Left cardiac atrium (tissue), 4 donors: ENCODE measurements at regions of chr3 and their contacts with region 1.

Region 1: GRCh38 chr3:138068579-138069174 is 46.7 kb downstream of the DZIP1L start:
- DNase-seq: peak; percentile 82
- ATAC-seq: peak; percentile 90 to 94

Region 2: GRCh38 chr3:137988152-137988551 is 80.5 kb before region 1 on chr3:
- intact Hi-C with region 1: no loop called
- DNase-seq: no peak
- ATAC-seq: no peak

Region 3: DNA sequence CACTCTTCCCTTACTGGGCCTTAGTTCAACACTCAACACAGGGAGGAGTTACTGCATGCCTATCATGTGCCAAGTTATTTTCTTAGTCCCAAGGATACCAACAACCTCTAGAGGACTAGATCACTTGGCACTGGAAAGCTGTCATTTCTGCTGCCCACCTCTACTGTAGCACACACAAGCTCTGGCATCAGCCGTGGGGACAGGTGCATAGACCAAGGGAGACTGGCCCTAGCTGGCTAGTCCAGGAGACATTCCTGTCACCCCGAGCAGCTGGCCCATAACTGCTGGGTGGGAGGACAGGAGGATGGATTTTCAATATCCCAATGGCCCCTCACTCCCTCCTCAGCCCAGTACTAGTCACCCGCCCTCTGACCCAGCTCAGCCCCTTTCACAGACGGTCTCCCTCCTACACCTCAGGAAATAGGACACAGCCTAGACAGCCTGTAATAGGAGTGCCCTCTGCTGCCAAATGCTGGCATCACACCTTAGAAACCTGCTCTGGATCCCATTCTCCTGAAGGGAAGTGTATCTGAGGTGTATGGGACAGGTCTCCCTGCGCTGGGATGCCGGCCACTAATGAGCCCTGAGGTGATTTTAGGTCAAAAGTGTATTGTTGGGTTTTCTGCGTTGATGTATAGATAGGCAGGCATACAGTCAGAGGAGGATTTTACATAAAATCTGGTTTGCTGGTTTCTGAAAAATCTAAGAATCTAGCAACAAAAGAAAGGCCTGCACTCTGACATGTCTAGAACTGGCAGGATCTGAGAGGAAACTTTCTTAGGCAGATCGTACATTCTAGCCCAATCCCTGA is 50.1 kb after region 1 on chr3:
- intact Hi-C with region 1: loop called (anchors 1 to 5 kb)
- DNase-seq: peak; percentile 65
- ATAC-seq: peak; percentile 20 to 54